SK-N-SH (cell line): ENCODE measurements at regions of chr21 and their contacts with region 1.

Region 1: GRCh38 chr21:32257962-32258785 is 20.7 kb downstream of the MIS18A start:
- DNase-seq: peak; percentile 81
- H3K4me3 ChIP-seq: peak overlapping the region in 1 of 2 experiments; percentile 36; a peak in 1 of 4 replicates
- H3K27ac ChIP-seq: peak overlapping the region; percentile 79 to 92; a peak in 3 of 4 replicates
- H3K4me1 ChIP-seq: peaks cover 11 to 27% of the 10 kb centered on the region in 2 experiments
- H3K27me3 ChIP-seq: no peaks in the 10 kb centered on the region
- CTCF ChIP-seq: peak; percentile 87
- EP300 ChIP-seq: 0 out of 4 replicates have a peak, but pooled peaks of 1 of the 2 experiments have one; percentile 11
- RAD21 ChIP-seq: peak; percentile 98

Region 2: DNA sequence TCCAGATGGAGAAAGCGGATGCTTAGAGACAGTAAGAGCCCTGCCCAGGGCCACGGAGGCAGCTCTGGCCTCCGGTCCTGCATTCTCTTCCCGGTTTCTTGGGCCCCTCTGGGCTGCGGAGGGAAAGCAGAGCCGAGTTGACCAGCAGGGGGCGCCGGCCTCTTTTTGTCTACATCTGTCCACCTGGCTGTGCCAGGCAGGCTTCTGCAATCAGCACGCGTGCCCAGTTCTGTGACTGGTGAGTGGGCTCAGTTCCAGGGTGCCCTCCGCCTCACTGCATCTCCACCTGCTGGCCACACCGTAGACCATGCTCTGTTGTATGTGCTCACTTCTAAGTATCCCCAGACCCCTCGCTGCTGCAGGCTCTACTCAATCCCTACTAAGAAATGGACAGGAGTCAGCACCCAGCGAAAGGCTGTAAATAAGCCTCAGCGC is 392.1 kb before region 1 on chr21:
- CTCF ChIA-PET with region 1: interaction called, 92 read pairs
- POLR2A ChIA-PET with region 1: no interaction called
- DNase-seq: peak; percentile 86
- H3K4me3 ChIP-seq: no peak overlapping the region; a peak in 1 of 4 replicates
- H3K27ac ChIP-seq: no peak overlapping the region
- H3K4me1 ChIP-seq: peaks cover 0 to 6% of the 10 kb centered on the region in 2 experiments; a peak in 1 of 4 replicates
- H3K27me3 ChIP-seq: no peaks in the 10 kb centered on the region; the same call in none of the 2 replicates
- CTCF ChIP-seq: peak; percentile 85
- EP300 ChIP-seq: no peak
- RAD21 ChIP-seq: peak; percentile 79

Region 3: GRCh38 chr21:31929548-31929947 is 328.6 kb before region 1 on chr21:
- CTCF ChIA-PET with region 1: interaction called, 15 read pairs
- POLR2A ChIA-PET with region 1: no interaction called
- DNase-seq: no peak
- H3K4me3 ChIP-seq: no peak overlapping the region
- H3K27ac ChIP-seq: no peak overlapping the region
- H3K4me1 ChIP-seq: peaks cover 0 to 16% of the 10 kb centered on the region in 2 experiments; a peak in 2 of 4 replicates
- H3K27me3 ChIP-seq: no peaks in the 10 kb centered on the region
- CTCF ChIP-seq: no peak
- EP300 ChIP-seq: no peak
- RAD21 ChIP-seq: no peak

Region 4: DNA sequence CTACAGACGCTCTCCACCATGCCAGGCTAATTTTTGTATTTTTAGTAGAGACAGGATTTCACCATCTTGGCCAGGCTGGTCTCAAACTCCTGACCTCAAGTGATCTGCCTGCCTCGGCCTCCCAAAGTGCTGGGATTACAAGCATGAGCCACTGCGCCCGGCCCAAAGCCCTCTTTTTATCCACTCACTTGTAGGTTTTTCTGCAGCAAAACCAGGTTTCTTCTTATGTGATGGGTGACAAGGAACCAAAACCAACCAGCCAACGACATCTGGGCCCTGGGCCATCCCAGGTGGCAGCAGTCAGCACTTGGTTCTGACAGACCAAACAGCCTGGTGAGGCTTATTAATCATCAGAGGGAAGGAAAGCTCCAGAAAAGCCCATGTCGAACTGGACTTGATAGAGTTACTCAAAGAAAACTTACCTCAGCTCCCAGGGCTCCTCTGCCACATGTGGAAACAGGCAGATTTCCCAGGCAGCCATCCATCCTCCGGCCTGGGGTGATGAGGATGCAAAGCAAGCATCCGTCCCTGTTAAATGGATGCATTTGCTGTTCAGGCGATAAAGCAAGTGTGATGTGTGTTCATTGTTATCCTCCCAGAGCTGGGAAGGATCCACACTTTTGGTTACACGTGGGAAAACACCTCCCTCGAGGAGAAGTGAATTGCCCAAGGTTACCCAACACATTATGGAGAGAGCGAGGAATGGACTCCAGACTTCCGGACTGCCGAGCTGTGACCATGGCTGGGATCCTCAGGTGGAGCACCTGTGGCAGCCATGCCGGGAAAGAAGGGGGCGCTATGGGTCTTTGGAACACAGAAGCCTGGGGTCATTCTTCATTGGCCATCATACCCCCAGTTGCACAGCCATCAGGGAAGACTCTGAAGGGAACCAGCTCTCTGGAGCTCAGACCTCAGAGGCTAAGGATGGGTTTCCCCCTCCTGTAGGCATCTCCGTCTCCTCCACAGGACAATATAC is 266.5 kb before region 1 on chr21:
- CTCF ChIA-PET with region 1: interaction called, 18 read pairs
- POLR2A ChIA-PET with region 1: no interaction called
- DNase-seq: peak; percentile 34
- H3K4me3 ChIP-seq: no peak overlapping the region
- H3K27ac ChIP-seq: no peak overlapping the region
- H3K4me1 ChIP-seq: no peaks in the 10 kb centered on the region; a peak in 1 of 4 replicates
- H3K27me3 ChIP-seq: no peaks in the 10 kb centered on the region
- CTCF ChIP-seq: 0 out of 2 replicates have a peak, but pooled peaks have one; percentile 9
- EP300 ChIP-seq: no peak
- RAD21 ChIP-seq: peak; percentile 49

Region 5: GRCh38 chr21:32096411-32096810 is 161.8 kb before region 1 on chr21:
- CTCF ChIA-PET with region 1: interaction called, 17 read pairs
- POLR2A ChIA-PET with region 1: no interaction called
- DNase-seq: peak; percentile 56
- H3K4me3 ChIP-seq: no peak overlapping the region
- H3K27ac ChIP-seq: no peak overlapping the region
- H3K4me1 ChIP-seq: peaks cover 0 to 18% of the 10 kb centered on the region in 2 experiments; a peak in 2 of 4 replicates
- H3K27me3 ChIP-seq: no peaks in the 10 kb centered on the region
- CTCF ChIP-seq: peak; percentile 52
- EP300 ChIP-seq: no peak
- RAD21 ChIP-seq: peak; percentile 39

Region 6: GRCh38 chr21:32270748-32271147 is 12.6 kb after region 1 on chr21:
- CTCF ChIA-PET with region 1: interaction called, 10 read pairs
- POLR2A ChIA-PET with region 1: no interaction called
- DNase-seq: no peak
- H3K4me3 ChIP-seq: no peak overlapping the region
- H3K27ac ChIP-seq: no peak overlapping the region
- H3K4me1 ChIP-seq: no peaks in the 10 kb centered on the region
- H3K27me3 ChIP-seq: no peaks in the 10 kb centered on the region
- CTCF ChIP-seq: no peak
- EP300 ChIP-seq: no peak
- RAD21 ChIP-seq: no peak

Region 7: DNA sequence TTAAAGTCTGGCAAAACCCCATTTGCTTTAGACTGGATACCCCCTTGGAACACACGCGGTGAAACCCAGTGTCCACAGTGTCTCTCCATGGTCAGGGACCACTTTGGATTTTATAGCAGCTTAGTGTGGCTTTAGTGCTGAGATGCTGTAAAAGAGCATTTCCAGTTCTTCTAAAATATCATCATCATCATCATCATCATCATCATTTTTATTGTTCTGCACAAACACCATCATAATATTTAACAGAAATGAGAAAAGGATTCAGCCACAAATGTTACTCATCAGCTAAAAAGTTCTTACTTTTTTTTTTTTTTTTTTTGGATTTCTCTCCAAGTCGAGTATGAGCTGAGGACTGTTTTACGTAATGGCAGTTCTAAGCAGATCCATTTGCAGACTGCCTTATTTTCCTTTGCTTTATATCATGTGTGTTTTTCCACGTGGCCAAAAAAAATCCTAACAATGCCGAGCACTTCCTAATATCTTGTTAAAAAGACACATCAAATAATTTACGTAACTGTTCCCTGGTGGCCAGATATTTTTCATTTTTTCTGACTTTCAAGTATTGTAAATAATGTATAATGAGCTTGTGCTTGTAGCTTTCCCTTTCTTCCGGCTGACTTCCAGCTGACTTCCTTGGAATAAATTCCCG is 217.1 kb after region 1 on chr21:
- CTCF ChIA-PET with region 1: no interaction called
- POLR2A ChIA-PET with region 1: no interaction called
- DNase-seq: no peak
- H3K4me3 ChIP-seq: no peak overlapping the region
- H3K27ac ChIP-seq: peak overlapping the region; percentile 23 to 71; a peak in 3 of 4 replicates
- H3K4me1 ChIP-seq: peaks cover 12 to 13% of the 10 kb centered on the region in 2 experiments; a peak in 1 of 4 replicates
- H3K27me3 ChIP-seq: no peaks in the 10 kb centered on the region
- CTCF ChIP-seq: no peak
- EP300 ChIP-seq: 0 out of 4 replicates have a peak, but pooled peaks of 1 of the 2 experiments have one; percentile 4
- RAD21 ChIP-seq: no peak